Activated CD8-positive, alpha-beta memory T cell treated with anti-CD3 and anti-CD28 coated beads, Interleukin-2, amount 10 ng/mL, durations not matched to agents 7 days and 5 days (primary cell): ENCODE measurements at regions of chr10 and their contacts with region 1.

Region 1: DNA sequence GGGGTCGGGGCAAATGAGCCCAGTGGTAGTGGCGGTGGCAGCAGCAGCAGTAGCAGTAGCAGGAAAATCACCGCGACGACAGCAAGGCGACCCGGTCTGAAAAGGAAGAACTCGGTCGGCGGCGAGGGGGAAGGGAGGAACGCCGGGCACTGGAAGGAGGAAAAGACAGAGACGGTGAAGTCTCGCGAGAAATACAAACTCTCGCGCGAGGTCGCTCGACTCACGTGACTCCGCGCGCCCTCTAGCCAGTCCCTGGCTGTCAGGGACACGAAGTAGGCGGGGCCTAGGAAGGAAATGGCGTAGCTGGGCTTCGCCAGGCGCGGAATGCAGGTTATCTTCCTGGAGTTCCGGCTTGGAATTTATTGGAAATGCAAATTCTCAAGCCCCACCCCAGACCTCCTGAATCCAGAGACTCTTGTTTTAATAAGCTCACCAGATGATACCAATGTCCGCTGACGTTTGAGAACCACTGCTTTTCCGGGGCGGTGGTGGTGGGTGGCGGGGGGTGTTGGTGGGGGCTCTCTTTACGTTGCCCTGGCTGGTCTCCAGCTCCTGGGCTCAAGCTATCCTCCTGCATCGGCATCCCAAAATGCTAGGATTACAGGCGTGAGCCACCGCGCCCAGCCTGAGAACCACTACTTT is at the start of gene SMNDC1:
- DNase-seq: peak; percentile 98
- ATAC-seq: peak; percentile 92
- H3K4me3 Mint-ChIP-seq: peak within 1 kb of the TSS; percentile 97
- H3K27ac Mint-ChIP-seq: peak within 1 kb of the TSS; percentile 98
- H3K4me1 Mint-ChIP-seq: peaks cover 63% of the 10 kb centered on the region
- H3K27me3 Mint-ChIP-seq: no peaks in the 10 kb centered on the region
- total RNA-seq, gene SMNDC1: 40.9 to 43.5 TPM

Region 2: GRCh38 chr10:109978481-109978880 is 326.4 kb before region 1 on chr10:
- CTCF ChIA-PET with region 1: no interaction called
- DNase-seq: peak; percentile 76
- ATAC-seq: peak; percentile 51
- H3K4me3 Mint-ChIP-seq: no peak overlapping the region
- H3K27ac Mint-ChIP-seq: no peak overlapping the region
- H3K4me1 Mint-ChIP-seq: peaks cover 1% of the 10 kb centered on the region
- H3K27me3 Mint-ChIP-seq: peaks cover 8% of the 10 kb centered on the region

Region 3: GRCh38 chr10:110137142-110137545 is 167.8 kb before region 1 on chr10:
- CTCF ChIA-PET with region 1: interaction called, 23 read pairs
- DNase-seq: no peak
- ATAC-seq: peak; percentile 72
- H3K4me3 Mint-ChIP-seq: no peak overlapping the region
- H3K27ac Mint-ChIP-seq: peak overlapping the region; percentile 25
- H3K4me1 Mint-ChIP-seq: peaks cover 28% of the 10 kb centered on the region
- H3K27me3 Mint-ChIP-seq: no peaks in the 10 kb centered on the region

Region 4: GRCh38 chr10:110502851-110503301 is 198.0 kb after region 1 on chr10:
- CTCF ChIA-PET with region 1: interaction called, 37 read pairs
- DNase-seq: no peak
- ATAC-seq: no peak
- H3K4me3 Mint-ChIP-seq: peak overlapping the region; percentile 99
- H3K27ac Mint-ChIP-seq: peak overlapping the region; percentile 97
- H3K4me1 Mint-ChIP-seq: peaks cover 76% of the 10 kb centered on the region
- H3K27me3 Mint-ChIP-seq: no peaks in the 10 kb centered on the region

Region 5: DNA sequence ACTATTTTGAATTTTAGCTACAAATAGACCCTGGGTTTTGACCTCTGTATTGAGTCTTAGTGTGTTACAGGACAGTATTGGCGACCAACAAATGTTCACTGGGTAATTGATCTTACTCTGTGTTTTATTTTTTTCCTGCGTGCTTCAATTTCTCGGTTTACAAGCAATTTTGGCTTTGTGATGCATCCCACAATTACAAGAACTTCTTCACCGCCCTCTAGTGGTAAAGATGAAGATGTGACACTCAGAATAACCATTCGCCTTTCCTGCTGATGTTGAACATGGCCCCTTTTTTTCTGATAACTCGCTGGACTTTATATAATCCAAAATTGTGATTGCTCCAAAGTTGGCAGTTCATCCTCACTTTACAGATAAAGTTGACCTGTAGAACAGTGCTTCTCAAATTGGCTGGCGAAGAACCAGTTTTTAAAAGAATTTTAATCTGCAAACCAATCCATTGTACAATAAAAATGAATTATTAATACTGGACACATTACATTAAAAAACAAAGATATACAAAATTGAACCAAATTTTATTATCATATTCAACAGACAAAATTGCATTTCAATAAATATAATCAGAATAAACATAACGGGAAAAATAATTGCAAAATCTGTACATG is 242.3 kb after region 1 on chr10:
- CTCF ChIA-PET with region 1: interaction called, 52 read pairs
- DNase-seq: no peak
- ATAC-seq: peak; percentile 84
- H3K4me3 Mint-ChIP-seq: no peak overlapping the region
- H3K27ac Mint-ChIP-seq: no peak overlapping the region
- H3K4me1 Mint-ChIP-seq: peaks cover 11% of the 10 kb centered on the region
- H3K27me3 Mint-ChIP-seq: peaks cover 32% of the 10 kb centered on the region

Region 6: DNA sequence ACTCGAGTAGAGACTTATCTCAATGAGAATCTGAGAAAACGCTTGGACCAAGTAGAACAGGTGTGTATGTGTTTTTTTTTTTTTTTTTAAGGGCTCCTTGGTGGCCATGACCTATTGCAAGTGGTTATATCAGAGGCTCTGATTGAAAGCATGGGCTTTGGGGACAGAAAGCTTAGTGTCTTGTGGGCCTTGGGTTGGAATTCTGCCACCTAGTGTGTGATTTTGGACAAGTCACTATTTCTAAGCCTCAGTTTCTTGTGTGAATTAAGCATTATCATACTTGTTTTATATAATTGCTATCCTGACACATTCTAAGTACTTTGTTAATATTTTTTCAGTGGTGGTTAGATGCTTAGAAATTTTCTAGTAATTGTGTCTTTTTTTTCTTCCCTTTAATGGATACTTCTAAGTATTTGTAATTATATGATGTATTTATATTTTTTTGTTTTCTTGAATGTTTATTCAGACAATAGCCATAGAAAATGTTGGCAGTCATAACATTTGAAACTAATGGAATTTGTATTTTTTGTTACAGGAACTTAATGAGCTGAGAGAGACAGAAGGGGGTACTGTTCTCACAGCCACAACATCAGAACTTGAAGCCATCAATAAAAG is 295.7 kb after region 1 on chr10:
- CTCF ChIA-PET with region 1: interaction called, 42 read pairs
- DNase-seq: peak; percentile 55
- ATAC-seq: peak; percentile 71
- H3K4me3 Mint-ChIP-seq: no peak overlapping the region
- H3K27ac Mint-ChIP-seq: peak overlapping the region; percentile 11
- H3K4me1 Mint-ChIP-seq: peaks cover 1% of the 10 kb centered on the region
- H3K27me3 Mint-ChIP-seq: no peaks in the 10 kb centered on the region